Ovary (tissue), 10 donors: ENCODE measurements at regions of chr17 and their contacts with region 1.

Region 1: DNA sequence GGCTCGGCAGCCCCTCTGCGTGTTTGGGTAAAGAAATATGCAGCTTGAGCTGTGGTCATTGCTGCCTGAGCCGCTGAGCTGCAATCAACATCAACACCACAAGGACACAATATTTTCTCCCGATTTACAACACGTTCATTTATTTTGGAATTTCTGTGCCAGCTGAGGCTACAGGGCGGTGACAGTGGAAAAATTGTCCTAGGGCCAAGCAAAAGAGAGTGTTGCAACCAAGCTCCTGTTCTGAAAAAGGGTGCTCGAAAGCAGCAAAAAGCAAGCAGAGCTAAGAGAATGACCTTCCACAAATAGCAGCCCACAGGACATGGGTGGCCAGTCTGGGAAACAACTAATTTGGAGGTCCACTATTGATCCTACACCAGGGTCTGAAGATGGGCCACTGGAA is 35.4 kb upstream of the NOG start:
- DNase-seq: no peak
- H3K4me3 ChIP-seq: no peak overlapping the region
- H3K27ac ChIP-seq: no peak overlapping the region
- H3K4me1 ChIP-seq: no peaks in the 10 kb centered on the region
- H3K27me3 ChIP-seq: no peaks in the 10 kb centered on the region
- CTCF ChIP-seq: no peak
- EP300 ChIP-seq: no peak
- POLR2A ChIP-seq: no peak

Region 2: GRCh38 chr17:56640116-56640515 is 82.0 kb after region 1 on chr17:
- intact Hi-C with region 1: loop called in 1 of 4 experiments (anchors 5 kb)
- DNase-seq: no peak
- H3K4me3 ChIP-seq: no peak overlapping the region
- H3K27ac ChIP-seq: no peak overlapping the region
- H3K4me1 ChIP-seq: no peaks in the 10 kb centered on the region
- H3K27me3 ChIP-seq: no peaks in the 10 kb centered on the region
- CTCF ChIP-seq: no peak
- EP300 ChIP-seq: no peak
- POLR2A ChIP-seq: no peak